ENCODE measurements at regions of chr10 and their contacts with region 1.

Region 1: GRCh38 chr10:30562787-30563186 is 66.8 kb downstream of the LYZL2 start:
- DNase-seq: no peak
- H3K4me3 ChIP-seq: no peak overlapping the region
- H3K27ac ChIP-seq: no peak overlapping the region
- H3K4me1 ChIP-seq: no peaks in the 10 kb centered on the region
- H3K27me3 ChIP-seq: no peaks in the 10 kb centered on the region
- CTCF ChIP-seq: no peak
- EP300 ChIP-seq: no peak
- POLR2A ChIP-seq: no peak

Region 2: GRCh38 chr10:29486433-29486832 is 1076.4 kb before region 1 on chr10:
- in situ Hi-C with region 1: no loop called
- intact Hi-C with region 1: no loop called
- DNase-seq: no peak
- H3K4me3 ChIP-seq: no peak overlapping the region
- H3K27ac ChIP-seq: no peak overlapping the region
- H3K4me1 ChIP-seq: peaks cover 0 to 16% (median 8%) of the 10 kb centered on the region in 4 donors
- H3K27me3 ChIP-seq: no peaks in the 10 kb centered on the region
- CTCF ChIP-seq: no peak
- EP300 ChIP-seq: no peak
- POLR2A ChIP-seq: no peak

Region 3: DNA sequence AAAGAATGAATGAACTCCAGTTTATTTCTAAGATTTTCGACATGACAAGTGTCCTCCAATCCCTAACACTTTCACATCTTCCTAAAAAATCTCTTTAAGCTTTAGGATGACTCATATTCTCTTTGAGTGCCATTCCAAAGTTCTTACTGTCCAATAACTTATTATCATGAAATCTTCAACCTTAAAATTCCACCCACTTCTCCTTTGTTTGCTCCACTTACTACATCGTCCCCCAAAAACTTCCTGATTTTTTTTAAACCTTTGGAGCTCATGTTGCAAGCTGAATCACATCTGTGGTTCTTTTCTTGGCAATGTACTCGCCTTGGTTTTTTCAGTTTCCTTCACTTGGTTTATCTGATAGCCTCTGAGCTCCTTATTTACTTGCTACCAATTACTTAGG is 464.2 kb before region 1 on chr10:
- in situ Hi-C with region 1: no loop called
- intact Hi-C with region 1: loop called (anchors 5 kb)
- DNase-seq: no peak
- H3K4me3 ChIP-seq: no peak overlapping the region
- H3K27ac ChIP-seq: no peak overlapping the region
- H3K4me1 ChIP-seq: no peaks in the 10 kb centered on the region
- H3K27me3 ChIP-seq: no peaks in the 10 kb centered on the region
- CTCF ChIP-seq: no peak
- EP300 ChIP-seq: no peak
- POLR2A ChIP-seq: no peak

Region 4: DNA sequence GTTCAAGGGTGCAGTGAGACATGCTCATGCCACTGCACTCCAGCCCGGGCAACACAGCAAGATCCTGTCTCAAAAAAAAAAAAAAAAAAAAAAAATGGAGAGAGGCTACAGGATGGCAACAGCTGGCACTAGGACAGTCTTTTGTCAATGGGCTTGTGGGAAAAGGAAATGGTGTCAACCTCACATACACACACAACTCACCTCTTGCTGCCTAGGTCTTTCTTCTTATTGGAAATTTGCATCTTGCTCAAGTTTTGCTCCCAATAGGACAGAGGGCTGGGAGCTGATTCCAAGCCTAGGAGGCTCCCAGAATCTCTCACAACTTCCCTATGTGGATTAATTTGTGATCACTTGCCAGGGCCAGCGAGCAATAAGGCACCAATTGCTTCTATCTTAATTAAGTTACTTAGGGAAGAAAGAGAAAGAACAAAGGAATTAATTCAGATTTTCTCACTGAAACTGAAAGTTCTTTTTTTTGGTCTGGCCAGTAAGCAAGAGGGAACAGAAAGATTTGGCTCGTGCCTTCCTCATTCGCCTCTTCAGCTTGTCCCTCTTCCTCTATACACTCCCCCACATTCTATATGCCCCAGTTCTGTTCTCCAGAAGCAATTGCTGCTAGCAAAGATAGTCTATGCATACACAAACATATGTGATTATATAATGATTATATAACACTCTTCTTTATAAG is 95.0 kb before region 1 on chr10:
- in situ Hi-C with region 1: no loop called
- intact Hi-C with region 1: no loop called
- DNase-seq: no peak
- H3K4me3 ChIP-seq: no peak overlapping the region
- H3K27ac ChIP-seq: no peak overlapping the region
- H3K4me1 ChIP-seq: peaks cover 0 to 7% (median 0%) of the 10 kb centered on the region in 4 donors
- H3K27me3 ChIP-seq: no peaks in the 10 kb centered on the region
- CTCF ChIP-seq: no peak
- EP300 ChIP-seq: no peak
- POLR2A ChIP-seq: no peak